T-cell (primary cell): ENCODE measurements at regions of chr18 and their contacts with region 1.

Region 1: DNA sequence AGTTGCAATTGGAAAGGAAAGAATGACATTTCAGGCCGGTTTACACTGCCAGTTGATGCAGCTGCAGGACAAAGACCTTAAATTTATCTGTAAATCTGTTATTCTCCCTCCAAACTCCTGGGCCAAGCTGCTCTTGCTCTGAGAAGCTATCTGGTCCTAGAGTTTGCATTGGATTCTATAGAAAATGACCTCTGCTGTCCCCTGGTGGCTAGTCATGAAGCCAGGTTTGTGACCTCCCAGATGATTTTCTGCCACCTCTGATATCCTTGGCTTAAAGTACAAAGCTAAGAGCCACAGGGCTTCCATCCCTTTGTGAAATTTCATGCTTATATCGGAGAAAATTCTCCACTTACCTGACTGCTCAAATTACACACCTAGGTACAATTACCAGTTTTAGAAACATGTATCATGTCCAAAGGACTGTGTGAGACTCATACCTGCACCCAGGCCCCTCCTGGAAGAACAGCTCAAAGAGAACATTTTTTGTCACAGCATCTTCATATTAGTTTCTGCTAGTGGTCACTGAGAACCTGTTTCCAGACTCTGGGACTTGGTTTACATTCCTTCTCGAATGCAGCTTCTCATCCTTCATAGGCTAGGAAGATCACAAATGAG is 28.9 kb upstream of the IER3IP1 start:
- DNase-seq: peak in 27 of 35 experiments; percentile 3 to 65 (median 24)
- ATAC-seq: peak in 1 of 4 experiments; percentile 43
- H3K4me3 ChIP-seq: no peak overlapping the region
- H3K4me3 Mint-ChIP-seq: no peak overlapping the region
- H3K27ac ChIP-seq: no peak overlapping the region
- H3K27ac Mint-ChIP-seq: no peak overlapping the region
- H3K4me1 ChIP-seq: no peaks in the 10 kb centered on the region
- H3K4me1 Mint-ChIP-seq: no peaks in the 10 kb centered on the region
- H3K27me3 ChIP-seq: peaks cover 0 to 2% of the 10 kb centered on the region in 2 experiments
- H3K27me3 Mint-ChIP-seq: peaks cover 12 to 41% of the 10 kb centered on the region in 2 donors

Region 2: GRCh38 chr18:47100214-47100831 is 104.7 kb before region 1 on chr18:
- CTCF ChIA-PET with region 1: interaction called, 11 to 16 read pairs
- POLR2A ChIA-PET with region 1: no interaction called
- DNase-seq: peak; percentile 3 to 70 (median 44)
- ATAC-seq: peak in 3 of 4 experiments; percentile 45 to 64 (median 49)
- H3K4me3 ChIP-seq: no peak overlapping the region
- H3K4me3 Mint-ChIP-seq: no peak overlapping the region
- H3K27ac ChIP-seq: no peak overlapping the region
- H3K27ac Mint-ChIP-seq: no peak overlapping the region
- H3K4me1 ChIP-seq: no peaks in the 10 kb centered on the region
- H3K4me1 Mint-ChIP-seq: no peaks in the 10 kb centered on the region
- H3K27me3 ChIP-seq: no peaks in the 10 kb centered on the region
- H3K27me3 Mint-ChIP-seq: no peaks in the 10 kb centered on the region